A673 (cell line): ENCODE measurements at regions of chr9 and their contacts with region 1.

Region 1: GRCh38 chr9:84230355-84231145 is 110.0 kb downstream of the SLC28A3 start:
- DNase-seq: no peak
- H3K4me3 ChIP-seq: no peak overlapping the region
- H3K27ac ChIP-seq: no peak overlapping the region
- H3K4me1 ChIP-seq: no peaks in the 10 kb centered on the region
- H3K27me3 ChIP-seq: no peaks in the 10 kb centered on the region
- CTCF ChIP-seq: no peak

Region 2: GRCh38 chr9:83601463-83601862 is 629.1 kb before region 1 on chr9:
- CTCF ChIA-PET with region 1: no interaction called
- POLR2A ChIA-PET with region 1: no interaction called
- intact Hi-C with region 1: no loop called
- DNase-seq: no peak
- H3K4me3 ChIP-seq: no peak overlapping the region
- H3K27ac ChIP-seq: no peak overlapping the region
- H3K4me1 ChIP-seq: peaks cover 3% of the 10 kb centered on the region
- H3K27me3 ChIP-seq: no peaks in the 10 kb centered on the region
- CTCF ChIP-seq: no peak

Region 3: GRCh38 chr9:84154320-84154719 is 76.2 kb before region 1 on chr9:
- CTCF ChIA-PET with region 1: interaction called, 12 read pairs
- POLR2A ChIA-PET with region 1: no interaction called
- intact Hi-C with region 1: no loop called
- DNase-seq: no peak
- H3K4me3 ChIP-seq: no peak overlapping the region
- H3K27ac ChIP-seq: no peak overlapping the region
- H3K4me1 ChIP-seq: no peaks in the 10 kb centered on the region
- H3K27me3 ChIP-seq: peaks cover 12% of the 10 kb centered on the region
- CTCF ChIP-seq: no peak

Region 4: DNA sequence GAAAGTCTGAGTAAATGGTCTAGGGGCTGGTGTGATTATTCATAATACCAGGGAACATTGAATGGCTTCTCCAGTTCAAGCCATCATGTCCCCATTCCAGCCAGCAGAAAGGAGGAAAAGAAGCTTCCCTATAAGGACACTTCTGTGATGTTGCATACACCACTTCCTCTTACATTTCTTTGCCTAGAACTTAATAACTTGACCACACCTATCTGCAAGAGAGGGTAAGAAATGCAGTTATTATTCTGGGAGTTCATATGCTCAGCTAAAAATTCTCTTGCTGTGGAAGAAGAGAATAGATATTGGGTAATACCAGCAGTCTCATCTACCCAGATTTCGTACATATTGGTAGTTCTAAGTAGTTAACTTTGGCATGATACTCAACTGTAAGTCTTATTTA is 56.1 kb before region 1 on chr9:
- CTCF ChIA-PET with region 1: interaction called, 14 read pairs
- POLR2A ChIA-PET with region 1: no interaction called
- intact Hi-C with region 1: no loop called
- DNase-seq: no peak
- H3K4me3 ChIP-seq: no peak overlapping the region
- H3K27ac ChIP-seq: no peak overlapping the region
- H3K4me1 ChIP-seq: no peaks in the 10 kb centered on the region
- H3K27me3 ChIP-seq: no peaks in the 10 kb centered on the region
- CTCF ChIP-seq: no peak